Sigmoid colon (tissue), 7 donors: ENCODE measurements at regions of chr15 and their contacts with region 1.

Region 1: GRCh38 chr15:67542420-67543347 is at the start of gene MAP2K5:
- DNase-seq: peak; percentile 91
- H3K4me3 ChIP-seq: peak within 1 kb of the TSS; percentile 68 to 94 (median 85)
- H3K27ac ChIP-seq: peak within 1 kb of the TSS; percentile 85 to 92 (median 88)
- H3K4me1 ChIP-seq: peaks cover 0 to 28% (median 17%) of the 10 kb centered on the region in 4 donors
- H3K27me3 ChIP-seq: no peaks in the 10 kb centered on the region
- CTCF ChIP-seq: no peak
- EP300 ChIP-seq: no peak
- POLR2A ChIP-seq: peak in 1 of 2 donors; percentile 43
- total RNA-seq, gene MAP2K5: 13.2 to 19.4 (median 15.7) TPM

Region 2: GRCh38 chr15:67225336-67225735 is 317.3 kb before region 1 on chr15:
- intact Hi-C with region 1: no loop called
- DNase-seq: no peak
- H3K4me3 ChIP-seq: no peak overlapping the region
- H3K27ac ChIP-seq: no peak overlapping the region
- H3K4me1 ChIP-seq: no peaks in the 10 kb centered on the region
- H3K27me3 ChIP-seq: no peaks in the 10 kb centered on the region
- CTCF ChIP-seq: no peak
- EP300 ChIP-seq: no peak
- POLR2A ChIP-seq: no peak

Region 3: DNA sequence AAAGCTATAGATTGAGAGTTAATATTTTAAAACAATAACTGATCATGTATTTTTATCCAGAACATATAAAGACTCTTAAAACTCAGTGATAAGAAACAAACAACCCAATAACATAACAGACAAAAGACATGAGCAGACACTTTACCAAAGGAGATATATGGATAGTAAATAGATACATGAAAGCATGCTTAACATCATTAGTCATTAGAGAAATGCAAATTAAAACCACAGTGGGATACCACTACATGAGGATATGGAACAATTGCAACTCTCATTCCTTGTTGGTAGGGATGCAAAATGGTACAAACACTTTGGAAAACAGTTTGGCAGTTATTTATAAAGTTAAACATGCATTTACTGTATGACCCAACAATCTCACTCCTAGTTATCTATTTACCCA is 193.1 kb before region 1 on chr15:
- intact Hi-C with region 1: no loop called
- DNase-seq: no peak
- H3K4me3 ChIP-seq: no peak overlapping the region
- H3K27ac ChIP-seq: no peak overlapping the region
- H3K4me1 ChIP-seq: no peaks in the 10 kb centered on the region
- H3K27me3 ChIP-seq: no peaks in the 10 kb centered on the region
- CTCF ChIP-seq: no peak
- EP300 ChIP-seq: no peak
- POLR2A ChIP-seq: no peak

Region 4: GRCh38 chr15:67521029-67521811 is 21.5 kb before region 1 on chr15 and contains the start of gene C15orf61:
- intact Hi-C with region 1: loop called (anchors 1 kb)
- DNase-seq: peak; percentile 92
- H3K4me3 ChIP-seq: peak within 1 kb of the TSS; percentile 65 to 86 (median 84)
- H3K27ac ChIP-seq: peak within 1 kb of the TSS; percentile 92 to 98 (median 96)
- H3K4me1 ChIP-seq: peaks cover 0 to 27% (median 22%) of the 10 kb centered on the region in 4 donors
- H3K27me3 ChIP-seq: no peaks in the 10 kb centered on the region
- CTCF ChIP-seq: no peak
- EP300 ChIP-seq: no peak
- POLR2A ChIP-seq: peak; percentile 28 to 42
- total RNA-seq, gene C15orf61: 2.8 to 8.6 (median 5.7) TPM

Region 5: GRCh38 chr15:67839929-67840748 is 297.5 kb after region 1 on chr15 and contains the start of gene RNU6-1:
- intact Hi-C with region 1: loop called (anchors 5 kb)
- DNase-seq: peak; percentile 97
- H3K4me3 ChIP-seq: peak within 1 kb of the TSS; percentile 89 to 95 (median 91)
- H3K27ac ChIP-seq: peak within 1 kb of the TSS; percentile 97 to 100 (median 99)
- H3K4me1 ChIP-seq: peaks cover 0 to 62% (median 51%) of the 10 kb centered on the region in 4 donors
- H3K27me3 ChIP-seq: peaks cover 8 to 11% (median 9%) of the 10 kb centered on the region in 3 donors
- CTCF ChIP-seq: no peak
- EP300 ChIP-seq: peak in 1 of 4 donors; percentile 52
- POLR2A ChIP-seq: peak; percentile 92 to 96
- total RNA-seq, gene RNU6-1: not detected

Region 6: DNA sequence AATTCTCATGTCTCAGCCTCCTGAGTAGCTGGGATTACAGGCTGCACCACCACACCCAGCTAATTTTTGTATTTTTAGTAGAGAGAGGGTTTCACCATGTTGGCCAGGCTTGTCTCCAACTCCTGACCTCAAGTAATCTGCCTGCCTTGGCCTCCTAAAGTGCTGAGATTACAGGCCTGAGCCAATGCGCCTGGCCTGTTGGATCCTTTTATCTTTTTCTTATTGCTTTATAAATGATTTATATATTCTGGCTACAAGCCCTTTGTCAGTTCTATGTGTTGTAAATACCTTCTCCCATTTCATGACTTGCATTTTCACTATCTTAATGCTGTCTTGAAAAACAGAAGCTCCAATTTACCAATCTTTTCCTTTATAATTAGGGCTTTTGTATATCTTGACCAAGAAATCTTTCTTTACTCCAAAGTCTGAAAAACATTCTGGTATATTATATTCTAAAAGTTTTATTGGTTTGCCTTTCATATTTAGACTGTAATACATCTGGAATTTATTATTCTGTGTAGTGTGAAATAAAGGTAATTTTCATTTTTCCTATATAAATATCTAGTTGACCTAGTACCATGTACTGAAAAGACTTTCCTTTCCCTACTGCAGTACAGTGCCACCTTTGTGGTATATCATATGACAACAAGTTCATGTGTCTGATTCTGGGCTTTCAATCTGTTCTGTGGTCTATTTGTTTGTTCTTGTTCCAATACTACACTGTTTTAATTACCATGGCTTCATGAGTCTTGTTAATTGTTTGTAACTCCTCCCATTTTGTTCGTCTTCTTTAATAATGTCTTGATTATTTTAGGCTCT is 350.1 kb after region 1 on chr15:
- intact Hi-C with region 1: no loop called
- DNase-seq: peak; percentile 81
- H3K4me3 ChIP-seq: no peak overlapping the region
- H3K27ac ChIP-seq: peak overlapping the region in 3 of 4 donors; percentile 68 to 69 (median 69)
- H3K4me1 ChIP-seq: peaks cover 0 to 28% (median 20%) of the 10 kb centered on the region in 4 donors
- H3K27me3 ChIP-seq: no peaks in the 10 kb centered on the region
- CTCF ChIP-seq: no peak
- EP300 ChIP-seq: no peak
- POLR2A ChIP-seq: no peak

Region 7: DNA sequence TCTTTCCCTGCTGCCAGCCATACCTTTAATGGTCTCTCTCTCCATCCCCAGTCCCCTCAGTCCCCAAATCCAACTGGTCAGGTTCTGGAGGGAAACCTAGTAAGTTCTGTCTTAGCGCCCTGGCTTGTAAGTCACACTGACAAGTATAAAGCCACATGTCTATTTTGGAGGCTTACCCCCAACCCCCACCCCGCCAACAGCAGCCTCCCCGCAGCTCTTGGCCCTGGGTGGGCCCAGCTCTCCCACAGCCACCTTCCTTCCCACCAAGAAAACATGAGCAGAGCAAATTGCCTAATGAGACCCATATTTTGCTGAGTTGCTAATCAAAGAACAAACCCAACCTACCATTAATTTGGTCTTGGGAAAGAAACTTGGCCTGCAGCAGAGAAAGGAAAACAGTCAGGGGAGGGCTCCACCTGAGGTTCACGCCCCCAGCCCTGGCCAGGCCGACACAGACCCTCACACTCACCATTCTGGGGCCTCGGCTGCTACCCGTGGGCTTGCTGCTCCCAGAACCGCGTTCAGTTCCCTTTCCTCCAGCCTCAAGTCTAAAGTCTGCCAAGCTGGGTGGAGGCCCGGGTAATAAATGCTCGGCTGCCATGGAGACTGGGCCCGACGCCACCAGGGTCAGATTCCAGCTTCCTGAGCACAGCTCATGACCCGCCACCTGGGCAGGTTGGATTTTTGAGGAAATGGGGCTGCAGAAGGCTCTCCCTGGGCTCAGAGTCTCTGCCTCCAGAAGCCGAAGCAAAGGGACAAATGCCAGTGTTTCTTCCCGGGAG is 662.3 kb after region 1 on chr15 and contains the start of gene CALML4:
- intact Hi-C with region 1: loop called (anchors 10 kb)
- DNase-seq: peak; percentile 86
- H3K4me3 ChIP-seq: peak within 1 kb of the TSS; percentile 7 to 34 (median 22)
- H3K27ac ChIP-seq: peak within 1 kb of the TSS; percentile 27 to 61 (median 41)
- H3K4me1 ChIP-seq: peaks cover 0 to 39% (median 35%) of the 10 kb centered on the region in 4 donors
- H3K27me3 ChIP-seq: no peaks in the 10 kb centered on the region
- CTCF ChIP-seq: no peak
- EP300 ChIP-seq: no peak
- POLR2A ChIP-seq: peak in 1 of 2 donors; percentile 57
- total RNA-seq, gene CALML4: 3.9 to 10.9 (median 5.4) TPM